ENCODE measurements at regions of chr2 and their contacts with region 1.

Region 1: GRCh38 chr2:84022810-84023431 is 436.2 kb downstream of the SUCLG1 start:
- DNase-seq: peak; percentile 16
- H3K4me3 ChIP-seq: no peak overlapping the region
- H3K27ac ChIP-seq: no peak overlapping the region
- H3K27me3 ChIP-seq: no peaks in the 10 kb centered on the region
- CTCF ChIP-seq: peak; percentile 81

Region 2: GRCh38 chr2:84033347-84033974 is 10.5 kb after region 1 on chr2:
- CTCF ChIA-PET with region 1: interaction called, 13 read pairs
- POLR2A ChIA-PET with region 1: no interaction called
- DNase-seq: no peak
- H3K4me3 ChIP-seq: no peak overlapping the region
- H3K27ac ChIP-seq: no peak overlapping the region
- H3K27me3 ChIP-seq: no peaks in the 10 kb centered on the region
- CTCF ChIP-seq: no peak

Region 3: DNA sequence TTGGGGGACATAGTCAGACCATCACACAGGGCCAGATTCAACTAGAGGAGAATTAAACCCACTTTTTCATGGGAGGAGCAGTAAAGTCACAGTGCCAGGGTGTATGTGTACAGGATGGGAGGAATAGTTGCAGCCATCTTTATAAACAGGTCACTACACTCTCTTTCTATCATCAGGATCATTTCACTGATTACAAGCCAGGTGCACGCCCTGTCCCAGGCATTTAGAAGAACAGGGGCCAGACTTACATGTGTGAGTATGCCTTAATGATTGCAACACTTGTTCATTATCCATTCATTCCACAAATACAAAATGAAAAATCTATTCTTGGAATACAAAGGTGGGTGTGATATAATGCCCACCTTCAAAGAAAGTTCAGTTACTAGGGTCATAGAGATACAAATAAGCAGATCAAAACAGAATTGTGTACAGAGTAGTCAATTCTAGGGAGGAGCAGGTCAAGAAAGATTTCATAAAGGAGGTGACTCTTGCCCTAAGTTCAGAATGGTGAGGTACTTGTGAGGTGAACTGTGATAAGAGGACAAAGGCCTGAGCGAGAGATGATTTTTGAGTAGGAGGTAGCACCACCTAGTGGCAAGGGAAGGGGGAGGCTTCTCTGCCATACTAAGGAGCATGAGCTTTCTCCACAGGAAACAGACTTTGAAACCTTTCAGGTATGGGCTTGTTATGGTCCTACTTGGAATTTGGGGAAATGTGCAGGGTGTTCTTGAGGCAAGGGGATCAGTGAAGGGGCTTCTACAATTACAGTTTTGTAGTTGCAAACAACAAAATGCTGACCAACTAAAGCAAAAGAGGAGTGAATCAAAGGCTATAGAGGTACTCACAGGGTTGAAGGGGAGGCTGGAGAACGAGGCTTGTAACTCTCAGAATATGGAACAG is 279.8 kb after region 1 on chr2:
- CTCF ChIA-PET with region 1: interaction called, 18 read pairs
- POLR2A ChIA-PET with region 1: no interaction called
- DNase-seq: no peak
- H3K4me3 ChIP-seq: no peak overlapping the region
- H3K27ac ChIP-seq: no peak overlapping the region
- H3K27me3 ChIP-seq: no peaks in the 10 kb centered on the region
- CTCF ChIP-seq: peak; percentile 93

Region 4: DNA sequence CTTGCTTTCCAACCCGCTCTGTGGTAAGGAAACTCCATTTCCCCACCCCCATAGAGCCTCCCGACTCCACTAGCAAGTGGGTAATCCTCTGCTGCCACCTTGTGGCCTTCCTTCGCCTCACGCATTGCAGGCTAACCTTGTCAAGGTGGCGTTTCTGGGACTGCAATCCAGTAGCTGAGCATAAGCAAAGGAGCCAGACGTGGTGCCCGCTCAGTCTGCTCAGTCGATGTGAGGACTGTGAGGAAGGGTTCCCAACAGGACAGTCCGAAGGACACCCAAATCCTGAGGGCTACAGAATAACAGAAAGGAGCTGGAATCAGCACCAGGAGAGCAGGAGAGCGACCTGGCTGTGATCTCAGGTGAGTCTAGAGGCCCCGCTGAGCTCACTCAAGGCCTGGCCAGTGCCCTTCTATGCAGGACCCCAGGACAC is 292.0 kb after region 1 on chr2:
- CTCF ChIA-PET with region 1: interaction called, 52 read pairs
- POLR2A ChIA-PET with region 1: no interaction called
- DNase-seq: peak; percentile 45
- H3K4me3 ChIP-seq: no peak overlapping the region
- H3K27ac ChIP-seq: no peak overlapping the region
- H3K27me3 ChIP-seq: peaks cover 5% of the 10 kb centered on the region
- CTCF ChIP-seq: peak; percentile 96

Region 5: GRCh38 chr2:84424152-84424551 is 401.2 kb after region 1 on chr2:
- CTCF ChIA-PET with region 1: interaction called, 12 read pairs
- POLR2A ChIA-PET with region 1: no interaction called
- DNase-seq: no peak
- H3K4me3 ChIP-seq: no peak overlapping the region
- H3K27ac ChIP-seq: no peak overlapping the region
- H3K27me3 ChIP-seq: no peaks in the 10 kb centered on the region
- CTCF ChIP-seq: peak; percentile 67